AG04449 (cell line): ENCODE measurements at regions of chr4 and their contacts with region 1.

Region 1: GRCh38 chr4:151362404-151363164 is 37.2 kb upstream of the SH3D19 start:
- DNase-seq: peak; percentile 21
- H3K4me3 ChIP-seq: no peak overlapping the region
- CTCF ChIP-seq: peak; percentile 98

Region 2: GRCh38 chr4:151604238-151604637 is 241.7 kb after region 1 on chr4:
- CTCF ChIA-PET with region 1: interaction called, 72 read pairs
- POLR2A ChIA-PET with region 1: no interaction called
- DNase-seq: no peak
- H3K4me3 ChIP-seq: no peak overlapping the region
- CTCF ChIP-seq: peak; percentile 33

Region 3: DNA sequence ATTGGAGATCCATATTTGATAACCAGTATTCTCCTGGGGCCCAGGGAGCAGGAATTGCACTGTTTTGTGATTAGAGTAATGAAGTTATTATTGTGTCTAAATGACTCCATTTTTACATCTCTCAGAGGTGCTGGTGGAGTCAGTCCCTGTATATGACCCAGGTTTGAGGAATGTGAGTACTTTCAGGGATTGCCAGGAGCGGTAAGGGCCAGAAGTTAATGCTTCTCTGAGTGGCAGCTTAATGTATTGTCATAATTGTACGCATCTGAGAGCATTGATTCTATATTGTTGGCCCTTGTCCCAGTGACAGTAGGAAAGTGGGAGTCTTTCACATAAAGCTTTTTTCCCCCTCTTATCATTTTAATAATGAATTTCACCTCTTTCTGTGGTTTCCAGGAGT is 252.0 kb after region 1 on chr4:
- CTCF ChIA-PET with region 1: interaction called, 17 read pairs
- POLR2A ChIA-PET with region 1: no interaction called
- DNase-seq: no peak
- H3K4me3 ChIP-seq: no peak overlapping the region
- CTCF ChIP-seq: no peak